ENCODE measurements at regions of chr14 and their contacts with region 1.

Region 1: GRCh38 chr14:53004976-53005375 is 54.1 kb upstream of the FERMT2 start:
- DNase-seq: no peak
- ATAC-seq: peak in 3 of 4 donors; percentile 29 to 41 (median 33)
- H3K4me3 ChIP-seq: no peak overlapping the region
- H3K27ac ChIP-seq: no peak overlapping the region
- H3K4me1 ChIP-seq: peaks cover 0 to 12% (median 0%) of the 10 kb centered on the region in 12 donors
- H3K27me3 ChIP-seq: no peaks in the 10 kb centered on the region
- CTCF ChIP-seq: no peak
- POLR2A ChIP-seq: no peak

Region 2: GRCh38 chr14:52402812-52403526 is 602.0 kb before region 1 on chr14:
- intact Hi-C with region 1: no loop called
- DNase-seq: no peak
- ATAC-seq: no peak
- H3K4me3 ChIP-seq: no peak overlapping the region
- H3K27ac ChIP-seq: no peak overlapping the region
- H3K4me1 ChIP-seq: peaks cover 0 to 33% (median 0%) of the 10 kb centered on the region in 12 donors
- H3K27me3 ChIP-seq: peaks cover 0 to 29% (median 0%) of the 10 kb centered on the region in 9 donors
- CTCF ChIP-seq: no peak
- POLR2A ChIP-seq: no peak

Region 3: GRCh38 chr14:53044486-53044885 is 39.5 kb after region 1 on chr14:
- intact Hi-C with region 1: loop called in 1 of 10 experiments (anchors 5 kb)
- DNase-seq: no peak
- ATAC-seq: no peak
- H3K4me3 ChIP-seq: no peak overlapping the region
- H3K27ac ChIP-seq: peak overlapping the region in 1 of 12 donors; percentile 14
- H3K4me1 ChIP-seq: peaks cover 4 to 39% (median 28%) of the 10 kb centered on the region in 12 donors
- H3K27me3 ChIP-seq: no peaks in the 10 kb centered on the region
- CTCF ChIP-seq: no peak
- POLR2A ChIP-seq: no peak